HepG2 (cell line): ENCODE measurements at regions of chr22 and their contacts with region 1.

Region 1: GRCh38 chr22:40499187-40499753 is 128.9 kb downstream of the SGSM3 start:
- DNase-seq: peak; percentile 84
- ATAC-seq: peak; percentile 60
- H3K4me3 ChIP-seq: peak overlapping the region in 2 of 3 experiments; percentile 0 to 17; a peak in 2 of 6 replicates
- H3K27ac ChIP-seq: peak overlapping the region; percentile 62
- H3K4me1 ChIP-seq: peaks cover 36% of the 10 kb centered on the region
- H3K27me3 ChIP-seq: no peaks in the 10 kb centered on the region
- CTCF ChIP-seq: no peak
- EP300 ChIP-seq: peak in 1 of 2 experiments; percentile 86; a peak in 3 of 4 replicates
- POLR2A ChIP-seq: peak in 1 of 2 experiments; percentile 55; a peak in 2 of 4 replicates
- RAD21 ChIP-seq: no peak

Region 2: DNA sequence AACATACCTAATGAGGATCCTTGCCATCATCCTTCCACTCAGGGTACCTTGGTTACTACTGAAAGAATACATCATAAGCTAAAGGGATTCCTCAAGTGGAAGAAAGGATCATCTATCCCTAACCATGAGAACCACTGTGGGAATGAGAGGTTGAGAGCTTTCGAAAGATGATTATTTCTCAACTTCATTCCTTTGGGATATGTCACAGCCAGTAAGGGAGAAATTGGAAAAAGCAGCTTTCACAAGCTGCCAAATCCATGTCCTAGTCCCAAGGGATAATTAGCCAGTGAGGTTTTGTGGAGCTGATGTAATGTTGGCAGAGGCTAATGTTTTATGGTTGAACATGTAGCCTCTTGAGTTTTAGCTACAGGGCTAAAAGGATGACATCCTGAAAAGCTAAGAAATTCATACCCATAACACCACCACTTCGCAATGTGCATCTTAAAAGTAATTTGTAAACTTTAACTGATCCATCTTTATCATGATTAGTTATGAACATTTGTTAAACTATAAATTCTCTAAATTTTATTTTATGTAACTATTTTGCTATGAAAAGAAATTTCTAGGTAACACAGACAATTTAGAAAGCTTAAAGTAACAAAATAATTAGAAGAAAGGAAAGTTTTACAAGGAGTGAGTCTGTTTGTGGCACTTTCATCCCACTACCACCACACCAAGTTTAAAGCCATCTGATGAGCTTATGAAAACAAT is 13.3 kb after region 1 on chr22:
- CTCF ChIA-PET with region 1: no interaction called
- POLR2A ChIA-PET with region 1: interaction called, 11 read pairs
- in situ Hi-C with region 1: no loop called
- intact Hi-C with region 1: no loop called
- DNase-seq: peak; percentile 55
- ATAC-seq: no peak
- H3K4me3 ChIP-seq: no peak overlapping the region
- H3K27ac ChIP-seq: no peak overlapping the region
- H3K4me1 ChIP-seq: peaks cover 24% of the 10 kb centered on the region
- H3K27me3 ChIP-seq: no peaks in the 10 kb centered on the region
- CTCF ChIP-seq: no peak
- EP300 ChIP-seq: no peak
- POLR2A ChIP-seq: no peak
- RAD21 ChIP-seq: no peak

Region 3: DNA sequence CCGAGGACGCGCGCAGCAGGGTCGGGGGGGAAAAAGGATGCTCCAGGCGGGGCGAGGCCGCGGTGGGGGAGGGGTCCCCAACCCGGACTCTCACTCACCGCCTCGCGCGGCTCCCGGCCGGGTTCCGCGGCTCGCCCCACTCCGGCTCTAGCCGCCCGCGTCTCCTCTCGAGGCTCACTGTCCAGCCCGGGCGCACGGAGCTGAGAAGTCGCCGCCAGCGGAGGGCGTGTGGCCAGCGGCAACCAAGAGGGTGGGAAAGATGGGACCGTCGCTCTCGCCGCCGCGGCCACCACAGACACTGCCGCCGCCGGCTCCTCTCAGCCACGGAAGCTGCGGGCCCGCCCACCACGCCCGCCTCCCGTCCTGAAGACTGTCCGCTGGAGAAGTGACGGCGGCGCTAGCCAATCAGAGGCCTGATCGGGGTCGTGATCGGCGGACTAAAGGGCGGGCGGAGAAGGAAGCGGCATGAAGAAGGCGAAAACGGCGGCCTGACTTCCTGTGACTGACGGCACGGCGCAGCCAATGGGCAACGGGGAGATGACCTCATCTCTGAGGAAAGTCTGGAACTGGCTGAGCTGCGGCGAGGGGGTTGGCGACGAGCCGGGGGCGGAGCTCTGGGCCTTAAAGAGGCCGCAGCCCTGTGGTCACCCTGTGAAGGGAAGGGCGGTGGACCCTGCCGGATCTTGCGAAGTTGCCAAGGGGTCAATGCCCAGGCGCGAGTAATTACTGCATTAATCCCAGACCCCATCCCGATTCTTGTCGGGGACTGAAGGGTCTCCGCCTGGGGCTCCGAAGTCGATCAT is 137.3 kb after region 1 on chr22 and contains the start of gene MRTFA:
- CTCF ChIA-PET with region 1: no interaction called
- POLR2A ChIA-PET with region 1: interaction called, 10 read pairs
- in situ Hi-C with region 1: no loop called
- intact Hi-C with region 1: no loop called
- DNase-seq: peak; percentile 98
- ATAC-seq: peak; percentile 95
- H3K4me3 ChIP-seq: peak within 1 kb of the TSS; percentile 98 to 100 (median 99)
- H3K27ac ChIP-seq: peak within 1 kb of the TSS; percentile 82
- H3K4me1 ChIP-seq: peaks cover 45% of the 10 kb centered on the region
- H3K27me3 ChIP-seq: no peaks in the 10 kb centered on the region; a peak in 1 of 5 replicates
- CTCF ChIP-seq: no peak; the same call in 1 of the 2 replicates
- EP300 ChIP-seq: no peak
- POLR2A ChIP-seq: peak; percentile 82 to 84
- RAD21 ChIP-seq: peak; percentile 69; the same call in 1 of the 2 replicates
- total RNA-seq, gene MRTFA: 8.2 and 9.9 TPM in 2 replicates

Region 4: GRCh38 chr22:40651563-40652501 is 152.6 kb after region 1 on chr22:
- CTCF ChIA-PET with region 1: no interaction called
- POLR2A ChIA-PET with region 1: interaction called, 12 read pairs
- in situ Hi-C with region 1: no loop called
- intact Hi-C with region 1: no loop called
- DNase-seq: peak; percentile 95
- ATAC-seq: peak; percentile 96
- H3K4me3 ChIP-seq: peak overlapping the region; percentile 68 to 90 (median 74)
- H3K27ac ChIP-seq: peak overlapping the region; percentile 87
- H3K4me1 ChIP-seq: peaks cover 45% of the 10 kb centered on the region
- H3K27me3 ChIP-seq: no peaks in the 10 kb centered on the region; a peak in 1 of 5 replicates
- CTCF ChIP-seq: no peak
- EP300 ChIP-seq: no peak
- POLR2A ChIP-seq: peak; percentile 85 to 91
- RAD21 ChIP-seq: 0 out of 2 replicates have a peak, but pooled peaks have one; percentile 6